ENCODE measurements at regions of chr12 and their contacts with region 1.

Region 1: GRCh38 chr12:50222275-50222795 is 55.2 kb upstream of the CERS5 start:
- DNase-seq: no peak
- H3K4me3 ChIP-seq: peak overlapping the region; percentile 48 to 61 (median 56)
- H3K27ac ChIP-seq: peak overlapping the region; percentile 83 to 86 (median 84)
- H3K4me1 ChIP-seq: peaks cover 12 to 65% (median 60%) of the 10 kb centered on the region in 4 donors
- H3K27me3 ChIP-seq: no peaks in the 10 kb centered on the region
- CTCF ChIP-seq: peak; percentile 15 to 46 (median 34)
- EP300 ChIP-seq: no peak
- POLR2A ChIP-seq: no peak

Region 2: GRCh38 chr12:50167041-50167828 is 55.1 kb before region 1 on chr12 and contains the start of gene CERS5:
- intact Hi-C with region 1: no loop called
- DNase-seq: peak; percentile 100
- H3K4me3 ChIP-seq: peak within 1 kb of the TSS; percentile 93 to 99 (median 97)
- H3K27ac ChIP-seq: peak within 1 kb of the TSS; percentile 94 to 98 (median 96)
- H3K4me1 ChIP-seq: peaks cover 10 to 39% (median 36%) of the 10 kb centered on the region in 4 donors
- H3K27me3 ChIP-seq: no peaks in the 10 kb centered on the region
- CTCF ChIP-seq: peak in 2 of 3 experiments; percentile 28 to 33
- EP300 ChIP-seq: no peak
- POLR2A ChIP-seq: peak; percentile 38
- total RNA-seq, gene CERS5: 23.0 to 33.6 (median 27.5) TPM

Region 3: GRCh38 chr12:50283229-50283923 is 61.0 kb after region 1 on chr12 and contains the start of gene LIMA1:
- intact Hi-C with region 1: loop called (anchors 5 kb)
- DNase-seq: peak; percentile 97
- H3K4me3 ChIP-seq: peak within 1 kb of the TSS; percentile 87 to 96 (median 93)
- H3K27ac ChIP-seq: peak within 1 kb of the TSS; percentile 82 to 84 (median 84)
- H3K4me1 ChIP-seq: peaks cover 15 to 30% (median 25%) of the 10 kb centered on the region in 4 donors
- H3K27me3 ChIP-seq: no peaks in the 10 kb centered on the region
- CTCF ChIP-seq: peak in 2 of 3 experiments; percentile 57 to 66
- EP300 ChIP-seq: no peak
- POLR2A ChIP-seq: peak; percentile 30
- total RNA-seq, gene LIMA1: 23.9 to 62.7 (median 37.2) TPM

Region 4: DNA sequence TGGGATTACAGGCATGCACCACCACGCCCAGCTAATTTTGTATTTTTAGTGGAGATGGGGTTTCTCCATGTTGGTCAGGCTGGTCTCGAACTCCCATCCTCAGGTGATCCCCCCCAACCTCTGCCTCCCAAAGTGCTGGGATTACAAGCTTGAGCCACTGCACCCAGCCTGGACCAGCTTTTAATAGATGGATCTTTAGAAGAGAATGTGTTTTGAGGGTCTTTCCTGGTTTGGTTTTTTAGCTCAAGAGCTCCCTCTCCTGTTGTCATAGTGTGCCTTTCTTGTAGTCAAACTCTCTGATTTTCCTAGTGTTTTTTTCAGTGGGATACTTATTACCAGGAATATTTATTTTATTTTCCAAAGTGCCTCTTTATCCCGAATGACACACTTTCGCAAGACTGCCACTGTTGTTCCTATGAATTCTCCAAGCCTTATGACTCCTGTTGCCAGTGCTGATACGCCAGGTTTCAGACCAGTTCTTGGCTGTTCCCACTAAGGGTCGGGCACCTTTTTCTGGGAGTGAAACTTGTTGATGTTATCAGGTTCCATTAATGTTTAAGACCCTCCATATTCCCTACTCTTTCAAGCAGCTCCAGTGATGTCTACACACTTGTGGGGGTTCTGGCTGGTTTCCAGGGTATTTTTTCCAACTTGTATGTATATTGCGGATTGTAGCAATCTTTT is 92.4 kb after region 1 on chr12:
- intact Hi-C with region 1: loop called (anchors 5 kb)
- DNase-seq: no peak
- H3K4me3 ChIP-seq: no peak overlapping the region
- H3K27ac ChIP-seq: no peak overlapping the region
- H3K4me1 ChIP-seq: peaks cover 0 to 11% (median 6%) of the 10 kb centered on the region in 4 donors
- H3K27me3 ChIP-seq: no peaks in the 10 kb centered on the region
- CTCF ChIP-seq: peak; percentile 45 to 57 (median 51)
- EP300 ChIP-seq: no peak
- POLR2A ChIP-seq: no peak

Region 5: GRCh38 chr12:50400598-50401364 is 178.4 kb after region 1 on chr12 and contains the start of gene LARP4:
- intact Hi-C with region 1: loop called (anchors 5 kb)
- DNase-seq: peak; percentile 97
- H3K4me3 ChIP-seq: peak within 1 kb of the TSS; percentile 77 to 92 (median 84)
- H3K27ac ChIP-seq: peak within 1 kb of the TSS; percentile 88 to 97 (median 96)
- H3K4me1 ChIP-seq: peaks cover 17 to 42% (median 36%) of the 10 kb centered on the region in 4 donors
- H3K27me3 ChIP-seq: no peaks in the 10 kb centered on the region
- CTCF ChIP-seq: no peak
- EP300 ChIP-seq: no peak
- POLR2A ChIP-seq: peak; percentile 85
- total RNA-seq, gene LARP4: 29.7 to 56.7 (median 39.9) TPM

Measured in esophagus muscularis mucosa (tissue), 4 donors.